Heart left ventricle (tissue), 16 donors: ENCODE measurements at regions of chr2 and their contacts with region 1.

Region 1: DNA sequence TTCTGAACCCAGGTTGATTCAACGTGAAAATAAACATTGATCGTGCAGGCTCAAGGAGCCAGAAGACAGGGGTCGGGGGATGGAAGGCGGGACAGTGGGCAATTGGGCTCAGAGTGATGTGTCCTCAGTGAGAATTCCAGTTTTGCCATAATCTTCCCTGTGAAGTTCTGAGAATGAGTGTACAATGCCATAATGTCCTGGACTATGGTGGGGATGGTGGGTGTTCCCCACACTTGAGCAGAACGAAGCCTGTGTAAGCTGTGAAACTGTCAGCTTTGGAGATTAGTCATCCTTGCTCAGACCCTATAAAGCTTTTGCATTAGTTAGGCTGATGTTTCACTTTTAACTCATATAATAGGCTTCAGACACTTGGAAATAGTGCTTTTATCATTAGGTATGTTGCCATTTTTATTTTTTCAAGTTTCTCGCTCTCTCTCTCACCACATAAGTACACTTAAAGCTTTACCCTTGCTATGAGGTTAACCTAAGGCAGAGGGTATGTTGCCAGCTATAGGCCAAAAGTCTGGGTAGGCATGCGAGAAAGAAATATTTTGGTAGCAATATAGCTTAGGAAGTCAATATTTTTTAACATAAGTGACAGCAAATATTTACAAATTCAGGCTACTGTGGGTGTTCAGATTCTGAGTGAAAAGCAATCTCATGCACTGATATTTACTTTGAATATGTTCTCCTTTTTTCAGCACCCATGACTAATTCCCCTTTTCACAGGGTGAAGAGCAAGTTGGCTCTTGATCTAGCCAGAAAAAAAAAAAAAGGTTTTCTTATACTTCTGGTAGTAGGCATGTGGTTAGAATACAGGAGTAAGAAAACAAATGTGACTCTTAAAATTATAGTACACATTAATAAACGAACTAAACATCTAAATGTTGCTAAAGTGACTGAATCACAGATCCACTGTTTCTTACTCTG is 47.2 kb downstream of the CDC42EP3 start:
- DNase-seq: no peak
- ATAC-seq: no peak
- H3K4me3 ChIP-seq: no peak overlapping the region
- H3K27ac ChIP-seq: peak overlapping the region in 1 of 12 donors; percentile 78
- H3K4me1 ChIP-seq: peaks cover 0 to 40% (median 11%) of the 10 kb centered on the region in 12 donors
- H3K27me3 ChIP-seq: no peaks in the 10 kb centered on the region
- CTCF ChIP-seq: no peak
- POLR2A ChIP-seq: no peak

Region 2: DNA sequence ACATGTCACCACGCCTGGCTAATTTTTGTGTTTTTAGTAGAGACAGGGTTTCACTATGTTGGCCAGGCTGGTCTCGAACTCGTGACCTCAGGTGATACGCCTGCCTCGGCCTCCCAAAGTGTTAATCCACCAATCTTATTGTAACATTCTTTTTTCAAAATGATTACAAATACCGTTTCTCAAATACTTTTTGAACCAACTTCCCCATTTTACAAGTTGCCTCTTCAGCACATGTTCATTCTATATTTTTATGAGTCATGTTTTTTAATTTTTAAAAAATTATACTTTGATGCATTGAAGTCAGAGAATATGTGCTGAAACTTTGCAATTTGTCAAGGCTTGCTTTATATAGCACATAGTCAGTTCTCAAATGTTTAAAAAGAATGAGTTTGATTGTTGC is 221.6 kb before region 1 on chr2:
- intact Hi-C with region 1: no loop called
- DNase-seq: no peak
- ATAC-seq: no peak
- H3K4me3 ChIP-seq: no peak overlapping the region
- H3K27ac ChIP-seq: no peak overlapping the region
- H3K4me1 ChIP-seq: peaks cover 0 to 4% (median 0%) of the 10 kb centered on the region in 12 donors
- H3K27me3 ChIP-seq: no peaks in the 10 kb centered on the region
- CTCF ChIP-seq: no peak
- POLR2A ChIP-seq: no peak

Region 3: GRCh38 chr2:37523814-37524362 is 100.3 kb before region 1 on chr2:
- intact Hi-C with region 1: loop called in 1 of 10 experiments (anchors 10 kb)
- DNase-seq: peak in 4 of 5 donors; percentile 43 to 61 (median 51)
- ATAC-seq: peak; percentile 90 to 98 (median 97)
- H3K4me3 ChIP-seq: no peak overlapping the region
- H3K27ac ChIP-seq: peak overlapping the region; percentile 1 to 89 (median 68)
- H3K4me1 ChIP-seq: peaks cover 0 to 33% (median 22%) of the 10 kb centered on the region in 12 donors
- H3K27me3 ChIP-seq: no peaks in the 10 kb centered on the region
- CTCF ChIP-seq: no peak
- POLR2A ChIP-seq: no peak